ENCODE measurements at regions of chr4 and their contacts with region 1.

Region 1: DNA sequence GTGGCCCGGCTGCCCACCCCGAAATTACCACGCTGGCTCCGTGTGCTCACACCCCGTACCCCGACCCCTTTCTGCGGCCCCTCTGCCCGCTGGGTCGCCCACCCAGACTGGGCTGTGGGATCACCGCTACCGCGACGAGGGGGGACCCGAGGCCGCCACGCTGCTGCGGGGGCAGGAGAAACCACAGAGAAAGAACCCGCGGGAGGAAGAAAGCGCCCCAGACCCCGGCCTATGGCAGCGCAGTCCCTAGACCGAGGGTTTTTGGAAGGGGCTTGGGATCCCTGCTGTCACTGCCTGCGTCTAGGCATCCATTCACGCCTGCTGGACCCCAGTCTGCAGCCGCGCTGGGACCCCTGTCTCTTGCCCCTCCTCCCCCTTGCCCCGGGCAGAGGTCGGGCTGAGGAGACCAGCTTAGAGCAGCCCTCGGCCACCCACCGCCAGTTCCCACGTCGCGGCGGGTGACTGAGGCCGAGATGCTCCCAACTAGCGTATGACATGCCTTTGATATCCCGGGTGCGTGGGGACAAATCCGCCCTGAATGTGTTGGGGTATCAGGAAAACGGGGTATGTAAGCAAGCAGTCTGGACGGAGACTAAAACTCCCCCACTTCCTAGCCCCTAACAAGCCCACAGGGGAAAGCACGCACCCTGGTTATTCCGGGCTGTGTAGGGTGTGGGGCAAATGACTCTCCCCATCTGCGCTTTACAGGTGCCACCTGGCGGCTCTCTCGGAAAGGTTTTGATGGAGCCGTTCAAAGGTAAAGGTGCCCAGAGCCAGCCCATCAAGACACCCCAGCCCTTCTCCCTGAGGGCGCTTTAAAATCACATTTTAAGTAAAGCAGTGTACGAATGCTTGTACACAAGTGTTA is 862 bp upstream of the INPP4B start:
- DNase-seq: peak; percentile 87
- H3K4me3 Mint-ChIP-seq: peak overlapping the region; percentile 87
- H3K27ac Mint-ChIP-seq: peak overlapping the region; percentile 43
- H3K4me1 Mint-ChIP-seq: peaks cover 19% of the 10 kb centered on the region
- H3K27me3 Mint-ChIP-seq: peaks cover 7% of the 10 kb centered on the region

Region 2: DNA sequence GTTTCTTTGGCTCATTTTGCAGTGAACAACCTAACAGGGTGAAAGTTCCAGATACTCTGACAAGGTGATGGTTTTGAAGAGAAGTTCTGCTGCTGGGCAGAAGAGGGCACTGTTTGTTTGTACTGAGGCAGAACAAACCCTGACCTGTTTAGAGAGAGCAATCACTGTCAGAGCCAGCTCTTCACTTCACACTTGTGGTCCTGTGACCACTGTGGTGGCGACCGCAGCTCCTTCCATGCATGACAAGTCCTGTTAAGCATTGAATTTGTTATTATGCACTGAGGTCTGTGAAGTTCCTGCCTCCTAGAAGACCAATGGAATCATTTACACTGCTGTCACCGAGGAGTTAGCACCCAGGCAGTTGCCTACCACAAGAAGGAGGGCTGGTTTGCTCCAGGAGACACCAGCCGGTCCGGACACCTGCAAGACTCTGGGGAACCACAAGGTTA is 1539.7 kb before region 1 on chr4:
- CTCF ChIA-PET with region 1: interaction called, 6 read pairs
- POLR2A ChIA-PET with region 1: no interaction called
- intact Hi-C with region 1: loop called (anchors 2 kb)
- DNase-seq: peak; percentile 84
- H3K4me3 Mint-ChIP-seq: no peak overlapping the region
- H3K27ac Mint-ChIP-seq: no peak overlapping the region
- H3K4me1 Mint-ChIP-seq: peaks cover 3% of the 10 kb centered on the region
- H3K27me3 Mint-ChIP-seq: peaks cover 3% of the 10 kb centered on the region

Region 3: GRCh38 chr4:141860974-141861373 is 986.0 kb before region 1 on chr4:
- CTCF ChIA-PET with region 1: no interaction called
- POLR2A ChIA-PET with region 1: no interaction called
- intact Hi-C with region 1: loop called (anchors 5 kb)
- DNase-seq: no peak
- H3K4me3 Mint-ChIP-seq: no peak overlapping the region
- H3K27ac Mint-ChIP-seq: no peak overlapping the region
- H3K4me1 Mint-ChIP-seq: no peaks in the 10 kb centered on the region
- H3K27me3 Mint-ChIP-seq: peaks cover 4% of the 10 kb centered on the region

Region 4: GRCh38 chr4:142126890-142127497 is 720.0 kb before region 1 on chr4:
- CTCF ChIA-PET with region 1: interaction called, 6 read pairs
- POLR2A ChIA-PET with region 1: no interaction called
- intact Hi-C with region 1: loop called (anchors 1 kb)
- DNase-seq: peak; percentile 68
- H3K4me3 Mint-ChIP-seq: no peak overlapping the region
- H3K27ac Mint-ChIP-seq: no peak overlapping the region
- H3K4me1 Mint-ChIP-seq: peaks cover 26% of the 10 kb centered on the region
- H3K27me3 Mint-ChIP-seq: no peaks in the 10 kb centered on the region

Region 5: DNA sequence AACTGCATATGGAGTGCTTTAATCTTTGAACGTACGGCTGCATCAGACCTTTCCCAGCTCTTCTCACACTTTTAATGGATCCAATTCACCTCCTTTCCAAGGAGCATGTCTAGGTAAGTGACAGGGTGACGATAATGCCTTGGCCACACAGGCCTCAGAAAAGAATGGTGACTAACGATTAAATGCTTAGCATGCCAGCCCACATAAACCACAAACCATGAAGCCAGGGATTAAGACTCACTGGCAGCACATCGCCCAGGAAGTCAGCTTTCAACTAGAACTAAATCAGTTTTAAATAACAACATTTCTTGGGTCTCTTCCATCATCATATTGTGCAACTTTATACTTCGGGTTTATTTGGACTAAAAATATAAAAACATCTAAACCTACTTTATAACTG is 29.5 kb before region 1 on chr4:
- CTCF ChIA-PET with region 1: no interaction called
- POLR2A ChIA-PET with region 1: no interaction called
- intact Hi-C with region 1: loop called (anchors 1 kb)
- DNase-seq: peak; percentile 70
- H3K4me3 Mint-ChIP-seq: no peak overlapping the region
- H3K27ac Mint-ChIP-seq: peak overlapping the region; percentile 4
- H3K4me1 Mint-ChIP-seq: peaks cover 20% of the 10 kb centered on the region
- H3K27me3 Mint-ChIP-seq: peaks cover 5% of the 10 kb centered on the region

Region 6: DNA sequence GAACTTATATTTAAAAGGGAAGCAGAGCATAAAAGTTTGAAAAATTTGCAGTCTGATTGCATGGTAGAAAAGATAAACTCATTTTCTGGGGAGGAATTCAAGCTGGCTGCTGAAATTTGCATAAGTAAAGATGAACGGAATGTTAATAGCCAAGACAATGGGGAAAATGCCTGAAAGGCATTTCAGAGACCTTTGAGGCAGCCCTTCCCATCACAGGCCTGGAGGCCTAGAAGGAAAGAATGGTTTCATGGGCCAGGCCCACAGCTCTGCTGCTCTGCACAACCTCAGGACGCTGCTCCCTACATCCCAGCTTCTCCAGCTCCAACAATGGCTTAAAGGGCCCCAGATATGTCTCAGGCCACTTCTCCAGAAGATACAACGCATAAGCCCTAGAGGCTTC is 46.0 kb after region 1 on chr4:
- CTCF ChIA-PET with region 1: no interaction called
- POLR2A ChIA-PET with region 1: no interaction called
- intact Hi-C with region 1: no loop called
- DNase-seq: no peak
- H3K4me3 Mint-ChIP-seq: no peak overlapping the region
- H3K27ac Mint-ChIP-seq: no peak overlapping the region
- H3K4me1 Mint-ChIP-seq: no peaks in the 10 kb centered on the region
- H3K27me3 Mint-ChIP-seq: peaks cover 3% of the 10 kb centered on the region

Measured in activated CD4-positive, alpha-beta memory T cell treated with anti-CD3 and anti-CD28 coated beads for 36 hours (primary cell).